PC-3 (cell line): ENCODE measurements at regions of chr15 and their contacts with region 1.

Region 1: DNA sequence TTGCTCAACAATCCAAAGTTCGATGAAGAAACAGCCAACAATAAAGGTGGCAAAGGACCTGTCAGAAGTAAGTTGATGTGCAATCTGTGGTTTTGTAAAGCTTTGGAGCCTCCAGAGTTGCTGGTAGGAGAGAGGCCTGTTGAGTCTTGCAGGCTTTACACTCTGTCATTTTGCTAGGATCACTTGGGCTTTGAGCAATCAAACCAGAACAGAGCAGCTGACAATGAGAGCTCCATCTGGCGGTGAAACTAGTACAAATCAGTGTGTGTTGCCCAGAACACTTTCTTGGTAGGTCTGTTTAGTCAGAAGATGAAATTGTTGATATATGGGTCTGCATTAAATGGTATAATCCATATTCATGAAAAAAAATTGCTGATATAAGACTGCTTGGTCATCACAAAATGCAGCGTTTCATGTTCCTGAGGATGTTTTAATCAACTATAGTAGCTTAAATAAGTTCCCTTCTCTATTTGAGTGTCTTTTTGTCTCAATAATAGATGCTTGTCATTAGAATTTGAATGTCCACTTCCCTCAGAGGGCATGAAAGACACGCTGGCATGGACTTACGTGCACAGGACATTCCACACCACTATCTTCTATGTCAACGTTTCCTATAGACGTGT is 25.7 kb downstream of the TMOD2 start:
- DNase-seq: peak; percentile 78
- ATAC-seq: peak; percentile 92
- H3K4me3 ChIP-seq: no peak overlapping the region
- H3K27ac ChIP-seq: no peak overlapping the region
- H3K4me1 ChIP-seq: peaks cover 12% of the 10 kb centered on the region
- H3K27me3 ChIP-seq: no peaks in the 10 kb centered on the region
- CTCF ChIP-seq: peak; percentile 76

Region 2: GRCh38 chr15:51536965-51537574 is 240.0 kb before region 1 on chr15:
- CTCF ChIA-PET with region 1: no interaction called
- POLR2A ChIA-PET with region 1: no interaction called
- intact Hi-C with region 1: loop called (anchors 2 kb)
- DNase-seq: peak; percentile 33
- ATAC-seq: no peak
- H3K4me3 ChIP-seq: no peak overlapping the region
- H3K27ac ChIP-seq: no peak overlapping the region
- H3K4me1 ChIP-seq: peaks cover 13% of the 10 kb centered on the region; the same call in 1 of the 2 replicates
- H3K27me3 ChIP-seq: no peaks in the 10 kb centered on the region
- CTCF ChIP-seq: peak; percentile 77

Region 3: DNA sequence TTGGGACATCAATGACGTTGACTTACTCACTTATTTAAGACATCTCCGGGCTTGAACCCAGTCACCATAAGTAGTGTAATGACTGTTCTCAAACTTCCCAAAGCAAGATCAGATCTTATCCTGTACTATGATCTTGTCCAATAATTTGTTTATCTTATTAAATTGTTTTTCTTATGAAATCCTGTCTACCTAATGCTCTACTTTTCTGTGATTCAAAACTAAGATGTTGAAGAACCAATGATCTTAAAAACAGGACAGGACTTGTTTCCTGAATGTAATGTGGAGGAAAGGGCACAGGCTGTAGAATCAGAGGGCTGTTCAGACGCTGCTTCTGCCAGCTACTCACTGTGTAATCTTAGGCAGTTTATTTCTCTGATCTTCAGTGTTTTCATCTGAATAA is 134.4 kb before region 1 on chr15:
- CTCF ChIA-PET with region 1: interaction called, 11 read pairs
- POLR2A ChIA-PET with region 1: interaction called, 22 read pairs
- intact Hi-C with region 1: no loop called
- DNase-seq: no peak
- ATAC-seq: no peak
- H3K4me3 ChIP-seq: no peak overlapping the region
- H3K27ac ChIP-seq: no peak overlapping the region
- H3K4me1 ChIP-seq: peaks cover 4% of the 10 kb centered on the region; the same call in 1 of the 2 replicates
- H3K27me3 ChIP-seq: no peaks in the 10 kb centered on the region
- CTCF ChIP-seq: no peak

Region 4: GRCh38 chr15:51649659-51650521 is 127.2 kb before region 1 on chr15:
- CTCF ChIA-PET with region 1: interaction called, 63 read pairs
- POLR2A ChIA-PET with region 1: no interaction called
- intact Hi-C with region 1: loop called (anchors 1 kb)
- DNase-seq: peak; percentile 77
- ATAC-seq: peak; percentile 81
- H3K4me3 ChIP-seq: no peak overlapping the region
- H3K27ac ChIP-seq: no peak overlapping the region
- H3K4me1 ChIP-seq: peaks cover 4% of the 10 kb centered on the region; the same call in 1 of the 2 replicates
- H3K27me3 ChIP-seq: no peaks in the 10 kb centered on the region
- CTCF ChIP-seq: peak; percentile 80